ENCODE measurements at regions of chr5 and their contacts with region 1.

Region 1: GRCh38 chr5:57779383-57780223 is 297.0 kb upstream of the ACTBL2 start:
- DNase-seq: peak; percentile 90
- H3K4me3 ChIP-seq: peak overlapping the region in 1 of 3 experiments; percentile 3
- H3K27ac ChIP-seq: peak overlapping the region; percentile 71
- H3K4me1 ChIP-seq: peaks cover 37% of the 10 kb centered on the region
- H3K27me3 ChIP-seq: no peaks in the 10 kb centered on the region
- CTCF ChIP-seq: peak; percentile 30 to 53
- POLR2A ChIP-seq: no peak

Region 2: GRCh38 chr5:57298295-57298984 is 481.2 kb before region 1 on chr5:
- CTCF ChIA-PET with region 1: interaction called, 114 read pairs
- POLR2A ChIA-PET with region 1: no interaction called
- dilution Hi-C with region 1: no loop called
- intact Hi-C with region 1: loop called (anchors 1 kb)
- DNase-seq: peak; percentile 86
- H3K4me3 ChIP-seq: no peak overlapping the region
- H3K27ac ChIP-seq: peak overlapping the region; percentile 47
- H3K4me1 ChIP-seq: peaks cover 10% of the 10 kb centered on the region
- H3K27me3 ChIP-seq: no peaks in the 10 kb centered on the region
- CTCF ChIP-seq: peak; percentile 72 to 73
- POLR2A ChIP-seq: no peak

Region 3: DNA sequence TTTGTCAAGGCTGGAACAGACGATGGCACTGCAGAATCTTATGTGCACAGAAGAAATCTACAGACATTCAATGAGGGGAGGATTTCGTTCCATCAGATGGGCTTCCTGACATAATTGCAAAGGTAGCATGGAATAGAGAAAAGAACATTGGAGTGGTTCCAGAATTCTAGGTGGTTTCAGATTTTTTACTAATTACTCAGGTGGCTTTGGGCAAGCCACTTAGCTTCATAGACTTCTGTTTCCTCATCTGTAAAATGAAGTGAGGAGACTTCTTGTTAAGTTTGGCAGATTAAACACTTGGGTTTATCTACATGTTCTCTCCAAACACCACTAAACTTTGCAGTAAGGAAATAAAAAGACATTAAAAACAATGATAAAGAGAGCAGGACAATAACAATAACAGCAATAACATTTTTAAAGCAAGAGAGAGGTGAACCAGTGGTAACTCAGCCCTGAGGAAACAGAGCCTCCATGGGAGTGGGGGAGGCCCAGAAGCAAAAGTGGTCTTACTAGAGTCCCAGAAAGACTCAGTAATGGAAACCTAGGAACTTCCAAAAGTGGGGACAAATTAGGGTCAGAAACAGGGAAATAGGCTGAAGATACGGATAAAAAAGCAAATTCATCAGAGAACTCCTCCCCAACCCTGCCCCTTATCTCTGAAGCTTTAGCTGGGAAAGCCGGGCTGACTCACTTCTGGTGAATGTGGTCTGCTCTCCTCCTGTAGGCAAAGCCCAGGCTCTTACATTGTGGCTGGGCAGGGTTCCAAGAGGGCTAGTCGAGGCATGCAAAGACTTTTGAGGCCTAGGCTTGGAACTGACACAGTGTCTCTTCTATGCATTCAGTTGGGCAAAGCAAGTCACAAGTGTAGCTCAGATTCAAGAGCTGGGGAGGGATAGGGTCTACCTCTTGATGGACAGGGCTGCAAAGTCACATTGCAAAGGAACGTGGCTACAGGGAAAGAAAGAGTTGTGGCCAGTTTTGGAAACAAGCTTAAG is 285.2 kb before region 1 on chr5:
- CTCF ChIA-PET with region 1: interaction called, 173 read pairs
- POLR2A ChIA-PET with region 1: interaction called, 3 read pairs
- dilution Hi-C with region 1: no loop called
- intact Hi-C with region 1: loop called (anchors 1 kb)
- DNase-seq: peak; percentile 93
- H3K4me3 ChIP-seq: no peak overlapping the region
- H3K27ac ChIP-seq: peak overlapping the region; percentile 92
- H3K4me1 ChIP-seq: peaks cover 48% of the 10 kb centered on the region
- H3K27me3 ChIP-seq: no peaks in the 10 kb centered on the region
- CTCF ChIP-seq: no peak
- POLR2A ChIP-seq: no peak

Region 4: GRCh38 chr5:57698769-57699168 is 80.8 kb before region 1 on chr5:
- CTCF ChIA-PET with region 1: interaction called, 14 read pairs
- POLR2A ChIA-PET with region 1: no interaction called
- dilution Hi-C with region 1: no loop called
- intact Hi-C with region 1: loop called (anchors 2 kb)
- DNase-seq: peak; percentile 75
- H3K4me3 ChIP-seq: no peak overlapping the region
- H3K27ac ChIP-seq: peak overlapping the region; percentile 60
- H3K4me1 ChIP-seq: peaks cover 29% of the 10 kb centered on the region
- H3K27me3 ChIP-seq: no peaks in the 10 kb centered on the region
- CTCF ChIP-seq: no peak
- POLR2A ChIP-seq: peak; percentile 15

Region 5: GRCh38 chr5:57710126-57710525 is 69.5 kb before region 1 on chr5:
- CTCF ChIA-PET with region 1: no interaction called
- POLR2A ChIA-PET with region 1: no interaction called
- dilution Hi-C with region 1: no loop called
- intact Hi-C with region 1: no loop called
- DNase-seq: no peak
- H3K4me3 ChIP-seq: no peak overlapping the region
- H3K27ac ChIP-seq: no peak overlapping the region
- H3K4me1 ChIP-seq: peaks cover 1% of the 10 kb centered on the region
- H3K27me3 ChIP-seq: no peaks in the 10 kb centered on the region
- CTCF ChIP-seq: no peak
- POLR2A ChIP-seq: no peak

Region 6: DNA sequence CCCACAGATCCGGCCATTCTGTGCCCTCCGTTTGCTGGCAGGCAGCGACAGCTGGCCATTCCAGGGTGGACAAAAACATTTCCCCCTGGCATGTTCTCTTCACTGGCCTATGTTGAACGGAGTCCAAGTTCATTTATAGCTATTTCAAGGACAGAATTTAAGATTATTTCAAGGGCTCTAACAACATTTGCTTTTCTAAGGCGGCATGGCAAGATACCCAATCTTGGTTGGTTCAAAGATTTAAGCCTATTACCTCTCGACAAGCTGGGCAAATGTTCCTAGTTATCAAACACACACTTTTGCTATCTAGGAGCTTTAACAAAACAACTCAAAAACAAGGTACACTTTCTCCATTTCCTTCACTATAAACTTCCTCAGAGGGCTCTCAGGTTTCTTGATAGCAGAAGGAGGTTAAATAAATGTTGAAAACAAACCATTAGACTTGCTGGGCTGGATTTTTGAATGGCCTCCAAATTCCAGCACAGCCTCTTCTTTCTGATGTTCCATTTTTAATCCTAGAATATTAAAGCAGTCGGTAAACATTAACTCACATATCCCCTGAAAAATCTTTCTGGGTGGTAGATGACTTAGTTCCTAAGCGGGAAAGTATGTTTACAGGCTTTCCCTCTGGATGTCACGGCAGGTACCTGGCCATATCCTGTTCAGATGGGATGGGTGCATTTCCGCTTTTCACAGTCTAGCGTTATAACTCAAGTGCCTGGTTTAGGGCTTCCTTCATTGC is 348.0 kb after region 1 on chr5:
- CTCF ChIA-PET with region 1: interaction called, 6 read pairs
- POLR2A ChIA-PET with region 1: no interaction called
- dilution Hi-C with region 1: no loop called
- intact Hi-C with region 1: loop called (anchors 10 kb)
- DNase-seq: peak; percentile 84
- H3K4me3 ChIP-seq: no peak overlapping the region
- H3K27ac ChIP-seq: no peak overlapping the region
- H3K4me1 ChIP-seq: peaks cover 7% of the 10 kb centered on the region
- H3K27me3 ChIP-seq: no peaks in the 10 kb centered on the region
- CTCF ChIP-seq: no peak
- POLR2A ChIP-seq: no peak

Region 7: DNA sequence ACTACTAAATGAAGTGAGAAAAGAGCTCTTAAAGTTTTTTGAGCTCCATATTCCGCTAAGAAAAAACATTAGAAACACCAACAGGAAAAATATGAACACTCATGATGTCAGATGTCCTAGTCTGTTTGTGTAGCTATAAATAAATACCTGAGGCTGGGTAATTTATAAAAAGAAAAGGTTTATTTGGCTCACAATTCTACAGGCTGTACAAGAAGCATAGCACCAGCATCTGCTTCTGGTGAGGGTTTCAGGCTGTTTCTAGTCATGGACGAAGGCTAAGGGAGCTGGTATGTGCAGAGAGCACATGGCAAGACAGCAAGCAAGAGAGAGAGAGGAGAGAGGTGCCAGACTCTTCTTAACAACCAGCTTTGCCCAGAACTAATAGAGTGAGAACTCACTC is 494.1 kb after region 1 on chr5:
- CTCF ChIA-PET with region 1: interaction called, 18 read pairs
- POLR2A ChIA-PET with region 1: interaction called, 4 read pairs
- dilution Hi-C with region 1: no loop called
- intact Hi-C with region 1: no loop called
- DNase-seq: no peak
- H3K4me3 ChIP-seq: no peak overlapping the region
- H3K27ac ChIP-seq: peak overlapping the region; percentile 42
- H3K4me1 ChIP-seq: peaks cover 12% of the 10 kb centered on the region
- H3K27me3 ChIP-seq: no peaks in the 10 kb centered on the region
- CTCF ChIP-seq: no peak
- POLR2A ChIP-seq: no peak

Region 8: DNA sequence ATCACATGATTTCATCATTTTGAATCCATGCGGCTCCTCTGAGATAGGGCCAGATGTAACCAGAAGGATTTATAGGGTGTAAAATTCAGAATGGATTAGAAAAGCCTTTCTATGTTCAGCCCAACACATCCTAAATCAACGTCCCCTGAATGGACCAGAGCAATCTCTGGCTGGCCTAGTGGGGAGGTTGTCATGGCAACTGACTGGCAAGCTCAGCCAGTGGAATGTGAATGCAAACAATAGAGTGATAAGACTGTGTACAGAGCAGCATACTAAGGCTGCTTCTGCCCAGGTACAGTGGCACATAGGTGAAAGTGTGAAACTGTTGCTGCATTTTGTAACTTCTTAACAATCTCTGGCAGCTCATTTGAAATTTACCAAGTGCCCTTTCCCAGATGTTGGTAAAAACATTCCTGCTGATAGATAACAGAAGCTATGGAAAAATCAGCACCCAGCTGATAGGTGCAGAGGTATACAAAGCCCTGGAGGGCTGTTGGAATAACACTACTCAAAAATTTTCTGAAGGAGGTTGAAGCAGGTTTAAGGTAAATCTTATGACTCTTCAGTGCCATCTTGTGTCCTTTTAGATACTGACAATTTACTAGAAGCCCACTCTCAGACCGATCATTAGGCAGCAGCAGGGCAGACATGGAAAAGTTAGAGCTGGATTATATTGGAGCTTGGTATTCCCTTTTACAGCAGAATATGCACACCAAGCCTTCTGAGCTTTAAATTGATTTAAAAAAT is 1070.5 kb after region 1 on chr5:
- CTCF ChIA-PET with region 1: interaction called, 9 read pairs
- POLR2A ChIA-PET with region 1: interaction called, 3 read pairs
- dilution Hi-C with region 1: no loop called
- intact Hi-C with region 1: loop called (anchors 5 kb)
- DNase-seq: peak; percentile 44
- H3K4me3 ChIP-seq: no peak overlapping the region
- H3K27ac ChIP-seq: no peak overlapping the region
- H3K4me1 ChIP-seq: no peaks in the 10 kb centered on the region
- H3K27me3 ChIP-seq: peaks cover 6 to 10% of the 10 kb centered on the region in 2 experiments
- CTCF ChIP-seq: peak; percentile 8 to 27
- POLR2A ChIP-seq: no peak

Measured in endothelial cell of umbilical vein (primary cell).